Activated CD4-positive, alpha-beta memory T cell treated with anti-CD3 and anti-CD28 coated beads for 36 hours (primary cell): ENCODE measurements at regions of chr19 and their contacts with region 1.

Region 1: DNA sequence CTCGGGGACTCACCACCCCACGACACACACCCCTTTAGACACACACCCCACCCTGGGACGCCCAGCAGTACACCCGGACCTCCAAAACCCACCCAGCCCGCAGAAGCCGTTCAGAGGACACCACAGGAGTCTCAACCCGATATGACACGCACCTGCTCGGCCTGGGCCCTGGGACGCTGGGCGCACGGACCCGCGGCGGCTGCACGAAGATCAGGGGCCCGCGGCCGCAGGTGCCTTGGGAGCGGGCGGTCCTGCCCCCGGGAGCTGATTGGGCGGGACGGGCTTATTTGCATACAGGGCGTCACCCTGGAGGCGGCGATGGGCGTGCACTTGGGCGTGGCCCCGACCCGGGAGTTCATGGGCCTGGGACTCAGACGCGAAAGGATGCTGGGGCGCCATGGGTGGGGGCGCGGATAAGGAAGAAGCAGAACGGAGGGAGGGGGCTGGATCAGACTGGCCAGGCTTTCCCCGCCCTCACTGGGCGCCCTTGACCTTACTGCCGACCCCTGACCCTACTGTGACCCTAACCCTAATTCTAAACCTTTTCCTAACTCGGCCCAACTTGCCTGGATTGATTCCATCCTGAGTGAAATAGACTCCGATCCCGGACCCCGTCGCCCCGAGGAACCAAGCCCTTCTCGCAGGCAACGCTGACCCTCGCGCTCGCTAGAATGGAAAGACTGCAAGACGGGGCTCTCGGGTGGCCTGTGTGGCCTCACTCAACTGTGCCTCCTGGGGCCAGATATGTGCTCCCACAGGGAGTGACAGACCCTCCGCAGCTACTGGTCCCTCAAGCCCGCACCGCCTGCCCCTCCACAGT is at the start of gene MEF2B:
- DNase-seq: peak; percentile 83
- H3K4me3 Mint-ChIP-seq: peak within 1 kb of the TSS; percentile 1
- H3K27ac Mint-ChIP-seq: no peak within 1 kb of the TSS
- H3K4me1 Mint-ChIP-seq: peaks cover 13% of the 10 kb centered on the region
- H3K27me3 Mint-ChIP-seq: no peaks in the 10 kb centered on the region
- total RNA-seq, gene MEF2B: 3.9 to 4.3 TPM

Region 2: GRCh38 chr19:19053508-19054314 is 116.6 kb before region 1 on chr19:
- CTCF ChIA-PET with region 1: interaction called, 11 read pairs
- POLR2A ChIA-PET with region 1: no interaction called
- intact Hi-C with region 1: no loop called
- DNase-seq: peak; percentile 58
- H3K4me3 Mint-ChIP-seq: no peak overlapping the region
- H3K27ac Mint-ChIP-seq: no peak overlapping the region
- H3K4me1 Mint-ChIP-seq: no peaks in the 10 kb centered on the region
- H3K27me3 Mint-ChIP-seq: no peaks in the 10 kb centered on the region

Region 3: DNA sequence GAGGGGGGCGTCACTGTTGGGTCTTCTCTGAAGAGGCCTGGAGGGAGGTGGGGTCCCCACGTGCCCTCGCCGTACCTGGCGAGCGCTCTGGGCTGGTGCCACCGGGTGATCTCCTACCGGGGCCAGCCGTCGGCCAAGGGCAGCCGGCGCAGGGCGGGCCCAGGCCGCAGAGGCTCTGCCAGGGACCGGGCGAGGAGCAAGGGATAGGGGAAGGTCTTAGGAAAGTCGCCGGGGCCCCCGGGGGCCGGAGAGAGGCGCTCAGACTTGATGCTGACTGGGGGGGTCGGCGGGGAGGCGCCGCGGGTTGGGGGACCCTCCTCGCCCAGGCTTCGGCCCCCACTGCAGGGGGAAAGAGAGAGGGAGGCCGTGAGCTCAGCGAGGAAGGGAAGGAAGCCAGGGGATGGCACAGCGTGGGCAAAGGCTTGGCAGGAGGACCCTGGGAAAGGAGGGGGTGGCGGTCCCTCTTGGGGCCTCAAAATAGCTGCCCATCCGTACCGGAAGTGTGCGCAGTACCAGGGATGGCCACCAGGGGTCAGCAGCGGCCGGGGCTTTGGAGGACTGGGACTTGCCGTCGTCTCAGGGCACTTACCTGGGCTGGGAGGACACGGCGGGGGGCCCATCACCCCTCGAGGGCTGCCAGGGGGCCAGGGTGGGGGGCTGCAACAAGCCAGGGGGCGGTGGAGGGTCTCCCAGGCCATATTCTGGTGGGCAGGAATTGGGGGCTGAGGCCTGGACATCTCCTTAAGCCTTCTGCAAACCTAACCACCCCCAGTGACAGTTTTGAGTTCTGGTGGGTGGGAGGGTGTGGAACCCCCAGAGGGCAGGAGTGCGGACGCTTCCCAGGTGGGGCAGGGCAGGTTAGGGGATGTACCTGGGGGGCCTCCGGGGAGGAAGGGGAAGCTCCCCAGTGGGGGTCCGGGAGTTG is 24.3 kb before region 1 on chr19:
- CTCF ChIA-PET with region 1: interaction called, 33 read pairs
- POLR2A ChIA-PET with region 1: no interaction called
- intact Hi-C with region 1: loop called (anchors 1 kb)
- DNase-seq: peak; percentile 91
- H3K4me3 Mint-ChIP-seq: no peak overlapping the region
- H3K27ac Mint-ChIP-seq: no peak overlapping the region
- H3K4me1 Mint-ChIP-seq: no peaks in the 10 kb centered on the region
- H3K27me3 Mint-ChIP-seq: no peaks in the 10 kb centered on the region

Region 4: GRCh38 chr19:19155495-19156219 is 14.6 kb before region 1 on chr19:
- CTCF ChIA-PET with region 1: interaction called, 15 read pairs
- POLR2A ChIA-PET with region 1: no interaction called
- intact Hi-C with region 1: no loop called
- DNase-seq: no peak
- H3K4me3 Mint-ChIP-seq: no peak overlapping the region
- H3K27ac Mint-ChIP-seq: no peak overlapping the region
- H3K4me1 Mint-ChIP-seq: no peaks in the 10 kb centered on the region
- H3K27me3 Mint-ChIP-seq: no peaks in the 10 kb centered on the region

Region 5: GRCh38 chr19:19185853-19186740 is 15.8 kb after region 1 on chr19:
- CTCF ChIA-PET with region 1: interaction called, 14 read pairs
- POLR2A ChIA-PET with region 1: no interaction called
- intact Hi-C with region 1: no loop called
- DNase-seq: peak; percentile 70
- H3K4me3 Mint-ChIP-seq: no peak overlapping the region
- H3K27ac Mint-ChIP-seq: no peak overlapping the region
- H3K4me1 Mint-ChIP-seq: peaks cover 30% of the 10 kb centered on the region
- H3K27me3 Mint-ChIP-seq: no peaks in the 10 kb centered on the region

Region 6: DNA sequence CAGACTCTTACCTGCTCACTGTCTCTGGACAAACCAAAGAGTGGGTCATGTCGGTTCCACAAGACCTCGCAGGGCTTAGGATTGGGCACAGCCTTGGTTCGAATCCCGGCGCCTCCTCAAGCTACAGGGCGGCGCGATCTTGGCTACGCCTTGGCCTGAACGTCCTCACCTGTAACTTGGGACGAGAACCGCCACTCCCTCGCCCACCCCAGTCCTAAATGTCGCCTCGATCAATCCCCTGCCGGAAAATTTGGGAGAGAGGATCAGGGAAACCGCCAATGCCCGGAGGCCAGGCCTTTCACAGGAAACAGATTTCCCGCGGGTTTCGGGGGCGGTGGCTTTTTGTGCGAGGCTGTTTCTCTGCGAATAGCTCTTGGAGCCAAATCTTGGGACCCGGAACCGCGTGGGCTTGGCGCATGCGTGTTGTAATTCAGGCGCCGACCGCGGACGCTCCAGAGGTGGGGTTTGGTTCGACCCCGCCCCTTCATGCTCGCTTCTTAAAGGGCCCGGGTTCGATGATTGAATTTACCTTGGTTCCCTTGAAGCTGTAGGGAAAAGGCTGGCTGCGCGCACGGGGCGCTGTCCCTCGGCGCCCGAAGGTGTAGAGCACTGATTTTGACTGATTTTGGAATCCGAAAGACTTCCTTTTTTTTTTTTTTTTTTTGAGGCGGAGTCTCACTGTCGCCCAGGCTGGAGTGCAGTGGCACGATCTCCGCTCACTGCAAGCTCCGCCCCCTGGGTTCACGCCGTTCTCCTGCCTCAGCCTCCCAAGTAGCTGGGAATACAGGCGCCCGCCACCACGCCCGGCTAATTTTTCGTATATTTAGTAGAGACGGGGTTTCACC is 33.0 kb after region 1 on chr19 and contains the start of gene NR2C2AP:
- CTCF ChIA-PET with region 1: interaction called, 15 read pairs
- POLR2A ChIA-PET with region 1: no interaction called
- intact Hi-C with region 1: no loop called
- DNase-seq: peak; percentile 96
- H3K4me3 Mint-ChIP-seq: peak within 1 kb of the TSS; percentile 94
- H3K27ac Mint-ChIP-seq: peak within 1 kb of the TSS; percentile 93
- H3K4me1 Mint-ChIP-seq: peaks cover 31% of the 10 kb centered on the region
- H3K27me3 Mint-ChIP-seq: no peaks in the 10 kb centered on the region
- total RNA-seq, gene NR2C2AP: 39.2 to 42.9 TPM

Region 7: GRCh38 chr19:19224852-19225494 is 54.7 kb after region 1 on chr19:
- CTCF ChIA-PET with region 1: interaction called, 6 read pairs
- POLR2A ChIA-PET with region 1: no interaction called
- intact Hi-C with region 1: loop called (anchors 5 kb)
- DNase-seq: peak; percentile 83
- H3K4me3 Mint-ChIP-seq: peak overlapping the region; percentile 62
- H3K27ac Mint-ChIP-seq: no peak overlapping the region
- H3K4me1 Mint-ChIP-seq: no peaks in the 10 kb centered on the region
- H3K27me3 Mint-ChIP-seq: peaks cover 13% of the 10 kb centered on the region